ENCODE measurements at regions of chr15 and their contacts with region 1.

Region 1: DNA sequence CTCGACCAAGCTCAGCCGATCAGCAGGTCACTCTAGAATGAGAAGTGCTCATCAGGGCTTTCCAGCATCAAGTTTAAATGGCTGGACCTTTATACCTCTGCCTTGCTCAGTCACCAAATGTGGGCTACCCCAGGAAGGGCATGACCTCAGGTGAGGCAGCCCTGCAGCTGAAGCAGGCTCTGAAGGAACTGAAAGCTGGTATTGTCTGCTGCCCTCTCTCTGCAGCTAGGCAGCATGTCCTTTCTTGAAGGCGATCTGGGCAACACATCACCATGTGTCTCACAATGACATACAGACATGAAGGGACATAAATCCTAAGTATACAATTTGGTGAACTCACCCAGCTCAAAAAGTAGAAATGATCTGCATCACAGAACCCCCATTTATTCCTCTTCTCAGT is 38.7 kb upstream of the ARID3B start:
- H3K4me3 ChIP-seq: no peak overlapping the region
- H3K27ac ChIP-seq: no peak overlapping the region
- H3K4me1 ChIP-seq: peaks cover 3% of the 10 kb centered on the region; the same call in 1 of the 2 replicates
- CTCF ChIP-seq: peak; percentile 9; the same call in 1 of the 2 replicates

Region 2: GRCh38 chr15:74144153-74144775 is 358.0 kb before region 1 on chr15:
- CTCF ChIA-PET with region 1: no interaction called
- POLR2A ChIA-PET with region 1: no interaction called
- H3K4me3 ChIP-seq: no peak overlapping the region
- H3K27ac ChIP-seq: no peak overlapping the region
- H3K4me1 ChIP-seq: no peaks in the 10 kb centered on the region
- CTCF ChIP-seq: no peak

Region 3: GRCh38 chr15:74489518-74490338 is 12.6 kb before region 1 on chr15:
- CTCF ChIA-PET with region 1: interaction called, 11 read pairs
- POLR2A ChIA-PET with region 1: interaction called, 3 read pairs
- H3K4me3 ChIP-seq: no peak overlapping the region
- H3K27ac ChIP-seq: no peak overlapping the region; the same call in 1 of the 2 replicates
- H3K4me1 ChIP-seq: peaks cover 3% of the 10 kb centered on the region; the same call in 1 of the 2 replicates
- CTCF ChIP-seq: peak; percentile 70